Activated CD8-positive, alpha-beta T cell treated with anti-CD3 and anti-CD28 coated beads for 36 hours (primary cell): ENCODE measurements at regions of chr12 and their contacts with region 1.

Region 1: GRCh38 chr12:62848421-62848820 is 86.5 kb downstream of the PPM1H start:
- DNase-seq: peak; percentile 32
- ATAC-seq: peak; percentile 80
- H3K4me3 Mint-ChIP-seq: no peak overlapping the region
- H3K27ac Mint-ChIP-seq: no peak overlapping the region
- H3K4me1 Mint-ChIP-seq: peaks cover 2% of the 10 kb centered on the region
- H3K27me3 Mint-ChIP-seq: peaks cover 10% of the 10 kb centered on the region
- CTCF ChIP-seq: no peak

Region 2: DNA sequence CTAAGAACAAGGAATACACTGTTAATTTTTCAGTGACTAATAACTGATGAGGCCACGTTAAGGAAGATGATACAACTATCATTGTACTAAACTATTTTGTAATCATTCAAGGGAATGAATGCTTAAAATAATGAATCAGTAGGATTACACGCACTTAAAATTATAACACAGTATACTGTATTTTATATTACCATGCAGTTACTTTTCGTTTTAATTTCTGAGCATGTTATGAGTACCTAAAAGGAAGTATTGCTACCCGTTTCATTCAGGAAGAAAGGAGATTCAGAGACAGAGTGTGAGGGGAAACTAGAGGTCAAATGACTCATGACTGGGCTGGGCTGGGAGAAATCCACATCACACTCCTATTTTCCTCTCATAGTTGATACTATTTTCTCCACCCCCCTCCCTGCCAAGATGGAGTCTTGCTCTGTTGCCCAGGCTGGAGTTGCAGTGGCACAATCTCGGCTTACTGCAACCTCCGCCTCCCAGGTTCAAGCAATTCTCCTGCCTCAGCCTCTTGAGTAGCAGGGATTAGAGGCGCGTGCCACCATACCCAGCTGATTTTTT is 115.5 kb before region 1 on chr12:
- CTCF ChIA-PET with region 1: no interaction called
- POLR2A ChIA-PET with region 1: no interaction called
- intact Hi-C with region 1: no loop called
- DNase-seq: no peak
- ATAC-seq: no peak
- H3K4me3 Mint-ChIP-seq: no peak overlapping the region
- H3K27ac Mint-ChIP-seq: no peak overlapping the region
- H3K4me1 Mint-ChIP-seq: peaks cover 9% of the 10 kb centered on the region
- H3K27me3 Mint-ChIP-seq: peaks cover 3% of the 10 kb centered on the region
- CTCF ChIP-seq: no peak

Region 3: DNA sequence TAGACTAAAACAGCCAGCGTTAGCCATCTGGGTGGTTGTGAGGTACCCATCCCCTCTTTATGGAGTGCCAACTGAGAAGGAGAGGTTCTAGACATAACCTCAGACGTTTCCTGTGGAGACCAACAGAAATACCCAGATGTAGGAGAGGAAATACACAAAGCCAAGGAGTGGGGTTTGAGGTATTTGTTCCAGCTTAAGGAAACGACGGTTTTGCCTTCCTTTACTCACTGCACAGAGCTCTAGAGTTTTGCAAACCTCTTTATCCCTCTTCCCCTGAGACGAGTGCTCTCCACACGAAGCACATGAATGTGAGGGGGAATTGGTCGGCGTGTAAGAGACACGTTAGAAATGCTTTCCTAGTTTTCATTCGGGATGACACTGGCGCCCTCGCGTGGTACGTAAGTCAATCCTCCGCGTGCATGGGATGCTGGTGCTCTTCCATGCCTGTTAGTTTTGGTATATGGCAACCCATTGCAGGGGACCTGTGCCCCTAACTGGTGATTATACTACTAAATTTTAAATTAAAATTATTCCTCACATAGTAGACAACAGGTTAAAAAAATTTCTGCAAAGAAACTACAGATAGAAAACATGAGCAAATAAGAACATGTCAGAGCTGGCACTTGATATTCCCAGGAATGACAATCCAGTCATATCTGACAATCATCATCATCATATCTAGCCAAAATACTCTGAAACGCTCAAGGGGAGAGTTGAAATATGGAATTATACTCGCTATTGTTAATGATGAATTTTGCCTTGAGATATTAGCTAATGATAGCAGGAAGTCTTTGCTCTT is 35.2 kb before region 1 on chr12:
- CTCF ChIA-PET with region 1: interaction called, 10 read pairs
- POLR2A ChIA-PET with region 1: no interaction called
- intact Hi-C with region 1: no loop called
- DNase-seq: peak; percentile 63
- ATAC-seq: peak; percentile 22
- H3K4me3 Mint-ChIP-seq: peak overlapping the region; percentile 23
- H3K27ac Mint-ChIP-seq: no peak overlapping the region
- H3K4me1 Mint-ChIP-seq: peaks cover 16% of the 10 kb centered on the region
- H3K27me3 Mint-ChIP-seq: peaks cover 15% of the 10 kb centered on the region
- CTCF ChIP-seq: peak; percentile 58

Region 4: DNA sequence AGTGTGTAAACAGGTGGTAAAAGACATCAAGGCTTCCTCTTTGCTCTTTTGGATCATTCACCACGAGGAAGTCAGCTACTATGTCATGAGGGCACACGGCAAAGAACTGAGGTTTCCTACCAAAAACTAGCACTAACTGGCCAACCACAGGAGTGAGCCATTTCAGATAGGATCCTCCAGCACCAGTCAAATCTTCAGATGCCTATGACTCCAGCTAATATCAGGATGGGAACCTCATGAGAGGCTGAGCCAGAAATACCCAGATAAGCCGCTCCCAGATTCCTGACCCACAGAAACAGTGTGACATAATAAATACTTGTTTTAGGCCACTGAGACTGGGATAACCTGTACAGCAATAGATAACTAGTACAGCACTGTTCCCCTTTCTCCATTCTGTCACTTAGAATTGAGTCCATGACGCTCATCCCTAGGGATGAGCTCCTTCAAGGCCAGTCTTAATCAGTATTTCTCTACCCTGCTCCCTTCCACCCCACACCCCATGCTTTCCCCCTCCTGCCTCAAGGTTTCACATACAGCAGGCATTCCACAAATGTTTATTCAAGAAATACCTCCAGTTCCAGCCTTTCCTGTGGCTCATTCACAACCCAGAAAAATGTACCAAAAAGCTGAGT is 18.1 kb after region 1 on chr12:
- CTCF ChIA-PET with region 1: no interaction called
- POLR2A ChIA-PET with region 1: no interaction called
- intact Hi-C with region 1: no loop called
- DNase-seq: no peak
- ATAC-seq: no peak
- H3K4me3 Mint-ChIP-seq: no peak overlapping the region
- H3K27ac Mint-ChIP-seq: no peak overlapping the region
- H3K4me1 Mint-ChIP-seq: no peaks in the 10 kb centered on the region
- H3K27me3 Mint-ChIP-seq: peaks cover 7% of the 10 kb centered on the region
- CTCF ChIP-seq: no peak